CD14-positive monocyte (primary cell): ENCODE measurements at regions of chr5 and their contacts with region 1.

Region 1: DNA sequence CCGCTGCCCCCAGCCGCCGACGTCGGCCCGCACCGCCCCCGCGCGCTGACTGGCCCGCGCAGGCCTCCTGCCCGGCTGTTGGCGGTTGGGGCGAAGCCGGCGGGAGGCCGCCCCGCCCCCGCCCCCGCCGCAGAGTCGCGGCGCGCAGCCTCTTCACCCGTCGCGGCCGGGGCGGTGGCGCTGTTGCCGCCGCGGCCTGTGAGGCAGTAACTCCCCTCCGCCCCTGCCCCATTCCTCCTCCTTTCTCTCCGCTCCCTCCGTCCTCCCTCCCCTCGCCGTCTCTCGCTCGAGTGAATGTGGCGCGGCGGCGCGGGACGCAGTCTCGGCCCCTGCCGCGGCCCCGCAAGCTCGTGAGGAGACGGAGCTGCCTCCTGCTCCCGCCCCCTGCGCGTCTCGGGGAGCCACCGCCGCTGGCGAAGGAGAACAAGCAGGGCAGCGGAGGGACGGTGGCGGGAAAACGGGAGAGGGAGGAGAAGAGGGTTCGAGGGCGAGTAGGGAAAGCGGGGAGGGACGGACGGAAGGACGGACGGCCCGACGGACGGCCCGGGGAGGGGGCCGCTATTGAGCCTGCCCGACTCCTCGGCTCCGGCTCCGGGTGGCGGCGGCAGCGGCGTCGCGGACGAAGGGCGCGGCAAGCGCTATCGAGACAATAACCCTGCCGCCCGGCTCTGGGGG is 637 bp upstream of the ERBIN start:
- DNase-seq: peak; percentile 78 to 81 (median 80)
- H3K4me3 ChIP-seq: peak overlapping the region; percentile 59 to 92 (median 91)
- H3K4me3 Mint-ChIP-seq: peak overlapping the region; percentile 83 to 88
- H3K27ac ChIP-seq: peak overlapping the region; percentile 97 to 98
- H3K27ac Mint-ChIP-seq: peak overlapping the region; percentile 87 to 97 (median 94)
- H3K4me1 ChIP-seq: peaks cover 19 to 45% of the 10 kb centered on the region in 2 donors
- H3K4me1 Mint-ChIP-seq: peaks cover 44% of the 10 kb centered on the region
- H3K27me3 ChIP-seq: peaks cover 3 to 8% of the 10 kb centered on the region in 2 donors
- H3K27me3 Mint-ChIP-seq: peaks cover 4 to 11% (median 4%) of the 10 kb centered on the region in 3 donors
- CTCF ChIP-seq: peak; percentile 12

Region 2: DNA sequence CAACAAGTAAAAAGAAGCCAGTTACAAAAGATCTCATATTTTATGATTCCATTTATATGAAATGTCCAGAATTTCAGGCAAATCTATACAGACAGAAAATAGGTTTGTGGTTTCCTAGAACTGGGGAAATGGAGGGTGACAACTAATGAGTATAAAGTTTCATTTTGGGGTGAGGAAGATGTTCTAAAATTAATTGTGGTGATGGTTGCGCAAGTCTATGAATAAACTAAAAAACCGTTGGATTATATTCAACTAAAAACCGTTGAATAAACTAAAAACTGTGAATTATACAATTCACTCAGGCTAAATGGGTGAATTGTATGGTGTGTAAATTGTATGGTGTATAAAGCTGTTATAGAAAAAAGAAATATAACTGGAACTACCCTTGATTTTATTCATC is 491.6 kb before region 1 on chr5:
- intact Hi-C with region 1: no loop called
- DNase-seq: no peak
- H3K4me3 ChIP-seq: no peak overlapping the region
- H3K4me3 Mint-ChIP-seq: no peak overlapping the region
- H3K27ac ChIP-seq: no peak overlapping the region
- H3K27ac Mint-ChIP-seq: no peak overlapping the region
- H3K4me1 ChIP-seq: no peaks in the 10 kb centered on the region
- H3K4me1 Mint-ChIP-seq: peaks cover 8% of the 10 kb centered on the region
- H3K27me3 ChIP-seq: no peaks in the 10 kb centered on the region
- H3K27me3 Mint-ChIP-seq: peaks cover 0 to 1% (median 0%) of the 10 kb centered on the region in 3 donors
- CTCF ChIP-seq: no peak

Region 3: GRCh38 chr5:65825408-65826328 is 100.1 kb before region 1 on chr5:
- intact Hi-C with region 1: loop called in 1 of 2 experiments (anchors 10 kb)
- DNase-seq: peak; percentile 49 to 84 (median 57)
- H3K4me3 ChIP-seq: peak overlapping the region in 1 of 3 experiments; percentile 15
- H3K4me3 Mint-ChIP-seq: peak overlapping the region in 1 of 2 donors; percentile 23
- H3K27ac ChIP-seq: peak overlapping the region in 1 of 2 donors; percentile 28
- H3K27ac Mint-ChIP-seq: peak overlapping the region; percentile 3 to 76 (median 54)
- H3K4me1 ChIP-seq: peaks cover 27 to 36% of the 10 kb centered on the region in 2 donors
- H3K4me1 Mint-ChIP-seq: peaks cover 31% of the 10 kb centered on the region
- H3K27me3 ChIP-seq: no peaks in the 10 kb centered on the region
- H3K27me3 Mint-ChIP-seq: no peaks in the 10 kb centered on the region
- CTCF ChIP-seq: no peak

Region 4: DNA sequence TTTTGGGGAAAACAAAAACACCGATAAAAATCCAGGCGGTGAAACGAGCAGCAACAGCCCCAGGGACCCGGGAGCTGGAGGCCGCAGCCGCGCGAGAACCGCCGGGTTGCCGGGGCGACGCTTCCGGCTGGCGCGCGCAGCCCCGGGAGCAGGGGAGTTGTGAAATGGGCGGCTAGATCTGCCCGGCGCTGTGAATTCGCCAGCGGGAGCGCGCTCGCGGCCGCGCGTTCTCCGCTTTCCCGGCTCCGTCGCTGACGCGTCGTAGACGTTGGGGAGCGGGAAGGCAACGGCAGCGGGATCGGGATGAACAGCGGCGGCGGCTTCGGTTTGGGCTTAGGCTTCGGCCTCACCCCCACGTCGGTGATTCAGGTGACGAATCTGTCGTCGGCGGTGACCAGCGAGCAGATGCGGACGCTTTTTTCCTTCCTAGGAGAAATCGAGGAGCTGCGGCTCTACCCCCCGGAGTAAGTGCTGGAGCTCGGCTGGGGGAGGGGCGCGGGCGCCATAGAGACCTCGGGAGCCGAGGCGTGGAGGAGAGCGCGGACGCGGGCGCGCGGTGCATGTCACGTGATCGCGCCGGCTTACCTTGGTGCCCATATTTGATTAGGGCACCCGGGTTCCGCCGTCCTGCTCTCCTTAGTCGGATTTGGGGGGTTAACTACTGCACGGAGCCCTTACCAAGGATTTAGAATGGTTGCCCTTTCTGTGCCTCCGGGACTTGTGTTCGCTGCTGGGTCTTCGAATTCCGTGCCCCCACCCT is 218.5 kb after region 1 on chr5 and contains the start of gene SREK1:
- intact Hi-C with region 1: loop called in 1 of 2 experiments (anchors 10 kb)
- DNase-seq: peak; percentile 85 to 87 (median 85)
- H3K4me3 ChIP-seq: peak within 1 kb of the TSS; percentile 66 to 99 (median 86)
- H3K4me3 Mint-ChIP-seq: peak within 1 kb of the TSS; percentile 97
- H3K27ac ChIP-seq: peak within 1 kb of the TSS; percentile 98 to 100
- H3K27ac Mint-ChIP-seq: peak within 1 kb of the TSS; percentile 99 to 100 (median 100)
- H3K4me1 ChIP-seq: peaks cover 11 to 26% of the 10 kb centered on the region in 2 donors
- H3K4me1 Mint-ChIP-seq: peaks cover 27% of the 10 kb centered on the region
- H3K27me3 ChIP-seq: no peaks in the 10 kb centered on the region
- H3K27me3 Mint-ChIP-seq: no peaks in the 10 kb centered on the region
- CTCF ChIP-seq: no peak
- polyA plus RNA-seq, gene SREK1: 6.4 to 34.8 (median 9.8) TPM